HEK293 (cell line): ENCODE measurements at regions of chr10 and their contacts with region 1.

Region 1: DNA sequence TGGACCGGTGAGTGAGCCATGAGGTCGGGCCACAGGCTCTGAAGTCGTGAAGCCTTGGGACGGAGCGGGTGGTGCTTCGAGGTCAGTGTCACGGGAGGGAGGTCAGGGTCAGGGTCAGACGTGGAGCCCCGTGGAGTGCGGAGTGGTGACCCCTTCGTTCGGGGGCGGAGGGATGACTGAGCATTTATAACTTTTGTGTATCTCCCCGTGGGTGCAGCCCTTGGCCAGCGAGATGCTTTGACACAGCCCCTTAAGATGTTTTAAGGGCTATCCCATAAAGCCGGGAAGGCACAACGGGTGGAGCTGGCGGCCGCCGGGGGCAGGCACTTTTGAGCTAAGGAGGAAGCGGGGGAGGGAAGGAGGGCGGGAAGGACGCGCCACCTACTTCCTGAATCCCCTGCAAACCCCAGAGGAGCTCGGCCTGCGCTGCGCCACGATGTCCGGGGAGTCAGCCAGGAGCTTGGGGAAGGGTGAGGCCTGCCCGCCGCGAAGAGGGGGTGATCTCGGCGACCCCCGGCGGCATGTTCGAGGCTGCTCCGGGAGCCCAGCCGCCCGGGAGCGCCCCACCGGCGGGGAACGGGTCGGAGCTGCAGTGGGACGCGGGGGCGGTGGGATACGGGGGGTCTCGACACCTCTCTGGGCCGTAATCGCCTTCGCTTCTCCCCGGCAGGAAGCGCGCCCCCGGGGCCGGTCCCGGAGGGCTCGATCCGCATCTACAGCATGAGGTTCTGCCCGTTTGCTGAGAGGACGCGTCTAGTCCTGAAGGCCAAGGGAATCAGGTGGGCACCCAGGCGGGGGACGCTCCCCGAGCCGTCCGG is at the start of gene GSTO1:
- H3K4me3 ChIP-seq: peak within 1 kb of the TSS; percentile 55
- H3K27ac ChIP-seq: peak within 1 kb of the TSS; percentile 88
- H3K4me1 ChIP-seq: peaks cover 24% of the 10 kb centered on the region
- CTCF ChIP-seq: peak; percentile 77

Region 2: DNA sequence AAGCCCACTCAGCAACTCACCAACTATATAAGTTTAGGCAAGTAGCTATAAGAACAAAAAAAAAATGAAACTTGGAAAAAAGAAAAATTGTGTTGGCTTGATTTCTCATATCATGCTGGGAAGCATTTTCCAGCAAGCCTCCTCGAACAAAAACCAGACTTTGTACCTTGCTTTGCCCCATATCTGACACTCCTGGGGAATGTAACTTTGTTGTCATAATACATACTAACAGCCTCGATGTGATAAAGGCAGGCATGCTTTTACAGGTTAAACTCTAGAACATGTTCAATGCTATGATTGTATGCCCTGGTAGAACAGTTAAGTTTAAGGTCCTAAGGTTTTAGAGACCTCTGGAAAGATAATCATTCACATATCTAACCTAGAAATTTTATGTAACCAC is 34.2 kb before region 1 on chr10:
- CTCF ChIA-PET with region 1: no interaction called
- POLR2A ChIA-PET with region 1: no interaction called
- H3K4me3 ChIP-seq: no peak overlapping the region
- H3K27ac ChIP-seq: no peak overlapping the region
- H3K4me1 ChIP-seq: no peaks in the 10 kb centered on the region
- CTCF ChIP-seq: no peak

Region 3: DNA sequence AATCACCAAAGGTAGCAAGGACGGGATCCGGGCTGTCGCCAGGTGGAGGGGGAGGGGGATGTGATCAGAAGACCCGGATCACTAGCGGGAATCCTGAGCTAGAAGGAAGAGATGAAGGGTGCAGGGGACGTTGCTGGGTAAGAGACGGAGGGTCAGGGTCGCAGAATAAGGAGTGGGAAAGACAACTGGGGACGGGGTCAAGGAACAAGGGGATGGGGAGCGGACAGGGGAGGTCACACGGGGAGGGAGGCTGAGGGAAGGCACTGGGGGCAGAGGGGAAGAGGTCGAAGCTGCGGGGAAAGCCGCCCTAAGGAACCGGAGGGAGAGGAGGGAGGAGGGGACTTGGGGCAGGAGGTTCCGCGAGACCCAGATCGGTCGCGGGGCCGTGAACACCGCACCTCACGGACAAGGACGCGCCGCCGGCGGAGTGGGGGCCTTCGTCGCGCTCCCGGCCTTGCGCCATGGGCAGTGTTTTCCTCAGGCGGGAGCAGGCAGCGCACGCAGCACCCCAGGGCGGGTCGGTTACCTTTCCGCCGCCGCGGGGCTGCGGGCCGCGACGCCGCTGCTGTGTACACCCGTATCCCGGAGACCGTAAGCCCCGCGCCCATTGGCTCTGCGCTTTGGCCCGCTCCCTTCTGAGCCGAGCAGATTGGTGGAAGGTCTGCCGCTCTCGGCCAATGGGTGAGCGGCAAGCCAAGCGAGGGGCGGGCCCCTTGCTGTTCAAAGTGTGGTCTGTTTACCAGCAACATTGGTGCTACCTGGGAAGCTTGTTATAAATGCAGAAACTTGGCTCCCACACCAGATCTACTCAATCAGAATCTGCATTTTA is 22.7 kb before region 1 on chr10 and contains the start of gene CFAP43:
- CTCF ChIA-PET with region 1: interaction called, 5 read pairs
- POLR2A ChIA-PET with region 1: interaction called, 16 read pairs
- H3K4me3 ChIP-seq: peak within 1 kb of the TSS; percentile 82
- H3K27ac ChIP-seq: peak within 1 kb of the TSS; percentile 7; the same call in 1 of the 2 replicates
- H3K4me1 ChIP-seq: no peaks in the 10 kb centered on the region
- CTCF ChIP-seq: no peak; the same call in none of the 2 replicates

Region 4: GRCh38 chr10:104268716-104269645 is 14.3 kb after region 1 on chr10 and contains the start of gene GSTO2:
- CTCF ChIA-PET with region 1: interaction called, 9 read pairs
- POLR2A ChIA-PET with region 1: interaction called, 44 read pairs
- H3K4me3 ChIP-seq: peak within 1 kb of the TSS; percentile 94
- H3K27ac ChIP-seq: peak within 1 kb of the TSS; percentile 13; the same call in 1 of the 2 replicates
- H3K4me1 ChIP-seq: 0 out of 2 replicates have a peak, but pooled peaks cover 2% of the 10 kb centered on the region
- CTCF ChIP-seq: 0 out of 2 replicates have a peak, but pooled peaks have one; percentile 9